ENCODE measurements at regions of chr4 and their contacts with region 1.

Region 1: DNA sequence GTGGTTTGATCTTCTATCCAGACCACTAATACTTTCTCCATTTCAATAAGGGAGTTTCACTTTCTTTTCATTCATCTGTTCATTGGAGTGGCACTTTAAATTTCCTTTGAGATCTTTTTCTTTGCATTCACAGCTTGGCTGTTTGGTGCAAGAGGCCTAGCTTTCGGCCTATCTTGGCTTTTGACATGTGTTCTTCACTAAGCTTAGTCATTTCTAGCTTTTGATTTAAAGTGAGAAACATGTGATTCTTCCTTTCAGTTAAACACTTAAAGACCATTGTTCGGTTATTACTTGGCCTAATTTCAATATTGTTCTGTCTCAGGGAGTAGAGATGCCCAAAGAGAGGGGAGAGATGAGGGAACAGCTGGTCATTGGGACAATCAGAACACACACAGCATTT is 24.3 kb downstream of the CXCL13 start:
- DNase-seq: no peak
- CTCF ChIP-seq: no peak

Region 2: DNA sequence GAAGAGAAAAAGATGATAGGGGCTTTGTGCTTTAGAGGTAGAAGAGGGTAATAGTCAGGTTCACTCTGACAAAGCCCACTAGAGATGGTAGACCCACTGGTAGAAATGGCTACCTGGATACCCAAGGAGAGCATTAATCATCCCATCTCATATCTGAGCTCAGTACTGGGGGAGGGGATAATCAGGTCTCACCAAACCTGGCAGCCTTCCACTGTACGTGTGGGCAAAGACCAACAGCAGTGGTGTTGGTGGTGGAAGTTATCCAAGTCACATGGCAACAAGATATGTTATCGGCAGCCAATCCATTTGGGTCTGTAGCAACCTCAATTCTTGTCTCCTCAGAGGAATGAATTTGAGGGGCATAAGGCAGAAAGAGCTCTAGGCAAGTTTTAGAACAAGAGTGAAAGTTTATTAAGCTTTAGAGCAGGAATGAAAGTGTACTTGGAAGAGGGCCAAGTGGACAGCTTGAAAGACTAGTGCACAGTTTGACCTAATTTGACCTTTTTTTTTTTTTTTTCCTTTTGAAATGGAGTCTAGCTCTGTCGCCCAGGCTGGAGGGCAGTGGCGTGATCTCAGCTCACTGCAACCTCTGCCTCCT is 91.2 kb before region 1 on chr4:
- CTCF ChIA-PET with region 1: no interaction called
- POLR2A ChIA-PET with region 1: no interaction called
- DNase-seq: no peak
- CTCF ChIP-seq: no peak

Region 3: GRCh38 chr4:77618383-77619122 is 11.3 kb before region 1 on chr4:
- CTCF ChIA-PET with region 1: interaction called, 33 read pairs
- POLR2A ChIA-PET with region 1: no interaction called
- DNase-seq: peak; percentile 70
- CTCF ChIP-seq: peak; percentile 89

Region 4: GRCh38 chr4:77669946-77670590 is 40.2 kb after region 1 on chr4:
- CTCF ChIA-PET with region 1: no interaction called
- POLR2A ChIA-PET with region 1: no interaction called
- DNase-seq: no peak
- CTCF ChIP-seq: no peak

Region 5: DNA sequence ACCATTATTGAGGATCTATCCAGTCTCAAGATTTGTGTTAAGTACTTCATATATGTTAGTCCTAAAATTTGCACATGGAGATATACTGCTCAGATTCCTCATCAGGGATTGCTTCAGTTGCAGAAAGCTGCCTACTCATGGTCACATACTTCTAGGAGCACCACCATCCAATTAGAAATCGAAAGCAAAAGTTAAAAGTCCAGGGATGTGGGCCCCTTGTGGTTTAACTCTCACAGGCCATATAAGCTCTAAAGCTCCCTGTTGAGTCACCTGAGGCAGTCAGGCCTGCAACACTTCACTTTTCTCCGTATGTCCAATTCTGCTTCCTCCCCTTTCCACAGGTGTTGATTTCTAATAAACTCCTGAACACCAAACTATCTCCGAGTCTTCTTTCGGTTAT is 105.0 kb after region 1 on chr4:
- CTCF ChIA-PET with region 1: no interaction called
- POLR2A ChIA-PET with region 1: no interaction called
- DNase-seq: peak; percentile 34
- CTCF ChIP-seq: no peak

Measured in GM10248 (cell line).